HEK293 (cell line): ENCODE measurements at regions of chr11 and their contacts with region 1.

Region 1: DNA sequence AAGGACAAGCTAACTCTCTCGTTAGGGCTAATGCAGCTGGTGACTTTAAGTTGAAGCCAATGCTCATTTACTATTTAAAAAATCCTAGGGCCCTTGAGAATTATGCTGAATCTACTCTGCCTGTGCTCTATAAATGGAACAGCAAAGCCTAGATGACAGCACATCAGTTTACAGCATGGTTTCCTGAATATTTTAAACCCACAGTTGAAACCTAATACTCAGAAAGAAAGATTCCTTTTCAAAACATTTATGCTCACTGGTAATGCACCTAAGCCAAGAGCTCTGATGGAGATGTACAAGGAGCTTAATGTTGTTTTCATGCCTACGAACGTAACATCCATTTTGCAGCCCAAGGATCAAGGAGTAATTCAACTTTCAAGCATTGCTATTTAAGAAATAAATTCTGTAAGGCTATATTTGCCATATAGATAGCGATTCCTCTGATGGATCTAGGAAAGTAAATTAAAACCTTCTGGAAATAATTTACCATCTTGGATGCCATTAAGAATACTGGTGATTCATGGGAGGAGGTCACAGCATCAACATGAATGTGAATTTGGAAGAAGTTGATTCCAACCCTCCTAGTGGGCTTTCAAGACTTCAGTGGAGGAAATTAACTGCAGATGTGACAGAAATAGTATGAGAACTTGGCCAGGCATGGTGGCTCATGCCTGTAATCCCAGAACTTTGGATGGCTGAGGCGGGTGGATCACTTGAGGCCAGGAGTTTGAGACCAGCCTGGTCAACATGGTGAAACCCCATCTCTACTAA is 14.5 kb downstream of the XNDC1N start:
- H3K4me3 ChIP-seq: no peak overlapping the region
- H3K27ac ChIP-seq: no peak overlapping the region
- H3K4me1 ChIP-seq: no peaks in the 10 kb centered on the region
- CTCF ChIP-seq: no peak

Region 2: GRCh38 chr11:71895961-71896360 is 18.0 kb before region 1 on chr11:
- CTCF ChIA-PET with region 1: no interaction called
- POLR2A ChIA-PET with region 1: no interaction called
- H3K4me3 ChIP-seq: no peak overlapping the region
- H3K27ac ChIP-seq: no peak overlapping the region
- H3K4me1 ChIP-seq: no peaks in the 10 kb centered on the region
- CTCF ChIP-seq: no peak

Region 3: GRCh38 chr11:71928737-71929452 is 15.0 kb after region 1 on chr11 and contains the start of gene RNF121:
- CTCF ChIA-PET with region 1: no interaction called
- POLR2A ChIA-PET with region 1: interaction called, 19 read pairs
- H3K4me3 ChIP-seq: peak within 1 kb of the TSS; percentile 89
- H3K27ac ChIP-seq: peak within 1 kb of the TSS; percentile 84
- H3K4me1 ChIP-seq: no peaks in the 10 kb centered on the region
- CTCF ChIP-seq: peak; percentile 18; the same call in 1 of the 2 replicates